AG04450 (cell line): ENCODE measurements at regions of chr3 and their contacts with region 1.

Region 1: DNA sequence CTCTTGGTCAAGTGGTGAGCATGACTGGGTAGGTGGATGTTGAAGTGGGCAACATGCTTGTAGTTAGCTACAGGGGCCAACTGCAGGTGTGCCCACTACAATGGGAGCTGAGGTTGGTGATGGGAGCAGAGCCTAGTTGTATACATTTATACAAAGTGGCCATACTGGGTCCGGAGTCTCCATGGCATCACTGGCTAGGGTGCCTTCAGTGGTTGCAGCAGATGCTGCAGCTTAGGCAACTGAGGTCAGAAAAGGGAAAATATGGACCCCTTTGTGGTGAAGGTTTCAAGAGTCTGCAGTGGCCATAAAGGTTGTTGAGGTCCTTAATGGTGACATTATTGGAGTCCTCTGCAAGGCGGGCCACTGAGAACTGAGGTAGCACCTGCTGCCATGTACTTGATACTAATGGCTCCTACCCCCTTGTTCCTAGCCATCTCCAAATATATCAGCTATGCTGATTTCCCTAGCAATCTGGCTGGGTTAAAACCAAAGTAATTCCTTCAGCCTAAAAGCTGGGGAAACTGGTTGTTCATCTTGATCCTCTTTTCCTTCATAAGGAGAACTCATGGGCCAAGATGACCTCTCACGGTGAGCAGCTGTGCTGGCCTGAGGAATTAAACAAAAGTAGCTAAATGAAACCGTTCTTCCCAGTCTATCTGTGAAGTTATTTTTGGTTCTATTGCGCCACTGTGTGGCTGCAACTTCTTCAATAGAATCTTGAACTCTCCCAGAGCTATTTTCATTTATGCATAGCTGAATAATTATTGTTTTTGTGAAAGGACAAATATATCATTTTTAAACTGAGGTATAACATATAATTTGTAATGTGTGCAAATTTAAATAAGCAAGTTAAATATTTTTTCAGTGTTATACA is 76.0 kb upstream of the PLSCR4 start:
- DNase-seq: peak; percentile 57
- H3K4me3 ChIP-seq: no peak overlapping the region
- H3K27ac ChIP-seq: no peak overlapping the region
- H3K27me3 ChIP-seq: no peaks in the 10 kb centered on the region
- CTCF ChIP-seq: peak; percentile 63

Region 2: GRCh38 chr3:146065573-146066006 is 261.3 kb before region 1 on chr3:
- CTCF ChIA-PET with region 1: interaction called, 31 read pairs
- POLR2A ChIA-PET with region 1: no interaction called
- DNase-seq: peak; percentile 48
- H3K4me3 ChIP-seq: no peak overlapping the region
- H3K27ac ChIP-seq: no peak overlapping the region
- H3K27me3 ChIP-seq: no peaks in the 10 kb centered on the region
- CTCF ChIP-seq: peak; percentile 72

Region 3: DNA sequence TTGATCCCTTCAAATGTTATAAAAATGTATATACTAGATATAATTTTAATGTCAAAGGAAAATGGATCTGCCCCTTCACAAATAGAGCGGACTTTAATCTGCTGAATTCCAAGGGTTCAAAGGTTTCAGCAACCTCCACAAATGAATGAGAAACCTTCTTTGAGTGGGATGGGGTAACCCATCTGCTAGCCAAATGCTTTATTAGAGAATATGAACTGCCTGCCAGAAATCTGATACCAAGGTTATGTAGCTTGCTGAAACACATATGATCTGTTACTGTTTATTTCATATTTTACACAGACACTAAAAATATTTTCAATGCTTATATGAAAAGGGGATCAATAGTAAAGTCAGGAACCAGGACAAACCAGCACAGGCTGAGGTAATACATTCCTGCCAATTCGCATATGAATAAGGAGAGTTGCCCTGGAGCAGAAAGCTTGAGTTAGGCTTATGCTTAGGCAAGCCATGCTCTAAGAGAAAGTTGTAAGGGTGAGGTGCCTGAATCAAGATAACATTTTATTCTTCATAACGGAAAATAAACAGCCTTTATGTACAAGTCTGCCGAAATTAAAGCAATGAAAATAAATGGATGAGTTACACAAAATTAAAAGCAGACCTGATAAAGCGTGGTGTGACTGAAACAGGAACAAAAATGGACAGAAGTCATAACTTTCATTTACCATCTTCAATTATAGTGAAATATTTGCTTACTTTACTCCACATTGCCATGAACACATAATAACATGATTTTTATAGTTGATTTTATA is 192.4 kb before region 1 on chr3:
- CTCF ChIA-PET with region 1: no interaction called
- POLR2A ChIA-PET with region 1: no interaction called
- DNase-seq: no peak
- H3K4me3 ChIP-seq: no peak overlapping the region
- H3K27ac ChIP-seq: no peak overlapping the region
- H3K27me3 ChIP-seq: no peaks in the 10 kb centered on the region
- CTCF ChIP-seq: no peak

Region 4: GRCh38 chr3:146209371-146209770 is 117.5 kb before region 1 on chr3:
- CTCF ChIA-PET with region 1: interaction called, 10 read pairs
- POLR2A ChIA-PET with region 1: no interaction called
- DNase-seq: no peak
- H3K4me3 ChIP-seq: no peak overlapping the region
- H3K27ac ChIP-seq: no peak overlapping the region
- H3K27me3 ChIP-seq: no peaks in the 10 kb centered on the region
- CTCF ChIP-seq: no peak

Region 5: GRCh38 chr3:146246526-146246925 is 80.4 kb before region 1 on chr3:
- CTCF ChIA-PET with region 1: interaction called, 12 read pairs
- POLR2A ChIA-PET with region 1: no interaction called
- DNase-seq: no peak
- H3K4me3 ChIP-seq: no peak overlapping the region
- H3K27ac ChIP-seq: no peak overlapping the region
- H3K27me3 ChIP-seq: no peaks in the 10 kb centered on the region
- CTCF ChIP-seq: no peak

Region 6: GRCh38 chr3:146382386-146382785 is 55.5 kb after region 1 on chr3:
- CTCF ChIA-PET with region 1: interaction called, 11 read pairs
- POLR2A ChIA-PET with region 1: no interaction called
- DNase-seq: no peak
- H3K4me3 ChIP-seq: no peak overlapping the region
- H3K27ac ChIP-seq: no peak overlapping the region
- H3K27me3 ChIP-seq: no peaks in the 10 kb centered on the region
- CTCF ChIP-seq: peak; percentile 45

Region 7: DNA sequence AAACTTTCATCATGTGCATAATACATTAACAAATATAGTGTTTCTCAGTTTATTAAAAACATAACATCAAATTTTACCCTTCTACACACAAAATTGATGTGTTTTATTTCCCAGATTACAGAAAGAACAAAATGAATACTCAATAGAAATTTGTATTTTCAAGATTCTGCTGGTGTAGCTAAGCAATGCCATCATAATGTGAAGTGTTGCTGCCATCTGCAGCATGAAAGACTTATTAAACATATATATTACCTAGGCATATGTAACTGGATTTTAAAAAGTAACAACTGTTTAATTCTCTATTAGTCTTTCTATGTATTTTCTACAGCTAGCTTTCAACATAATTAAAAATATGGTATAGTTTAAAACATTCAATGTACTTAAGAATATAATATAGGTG is 250.8 kb after region 1 on chr3:
- CTCF ChIA-PET with region 1: interaction called, 36 read pairs
- POLR2A ChIA-PET with region 1: no interaction called
- DNase-seq: peak; percentile 43
- H3K4me3 ChIP-seq: no peak overlapping the region
- H3K27ac ChIP-seq: no peak overlapping the region
- H3K27me3 ChIP-seq: no peaks in the 10 kb centered on the region
- CTCF ChIP-seq: peak; percentile 47